Psoas muscle (tissue), 8 donors: ENCODE measurements at regions of chr13 and their contacts with region 1.

Region 1: DNA sequence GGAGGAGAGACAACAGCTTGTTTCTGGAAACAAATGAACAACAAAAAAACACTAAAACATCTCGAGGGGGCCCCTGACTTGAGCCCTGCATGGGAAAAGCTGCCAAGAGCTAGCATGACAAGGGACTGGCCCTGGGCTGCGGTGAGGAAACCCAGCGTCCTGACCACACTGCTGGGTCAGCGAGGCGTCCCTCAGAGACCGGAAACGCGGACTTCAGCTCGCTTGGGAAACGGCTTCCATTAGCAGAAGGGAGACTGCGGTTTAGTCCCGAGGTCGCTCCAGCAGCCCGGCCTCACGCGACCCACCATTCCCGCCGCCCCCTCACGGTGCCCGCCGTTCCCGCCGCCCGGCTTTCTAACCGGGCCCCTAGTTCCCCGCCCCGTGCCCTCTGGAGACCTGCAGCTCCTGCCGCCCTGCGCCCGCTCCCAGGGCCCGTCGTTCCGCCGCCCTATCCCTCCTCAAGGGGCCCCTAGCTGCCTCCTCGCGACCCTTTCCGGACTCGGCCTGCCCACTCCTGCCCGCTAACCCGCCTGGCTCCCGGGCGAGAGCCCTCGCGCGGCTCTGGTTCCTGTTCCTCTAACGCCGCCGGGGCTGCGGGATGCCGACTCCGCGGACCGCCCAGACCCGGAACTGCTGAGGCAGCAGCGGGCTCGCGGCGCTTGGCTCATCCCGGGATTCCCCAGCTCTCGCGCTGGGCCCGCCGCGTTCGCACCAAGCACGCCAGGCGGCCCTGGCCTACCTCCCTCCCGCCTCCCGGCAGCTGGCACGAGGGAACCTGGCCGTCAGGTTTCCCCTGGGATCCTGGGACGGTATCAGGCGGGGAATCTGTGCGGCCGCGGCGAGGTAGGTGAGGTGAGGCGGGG is at the start of gene CCDC122:
- DNase-seq: peak; percentile 88 to 90
- ATAC-seq: peak; percentile 90 to 94 (median 92)
- H3K4me3 ChIP-seq: peak within 1 kb of the TSS; percentile 89
- H3K27ac ChIP-seq: peak within 1 kb of the TSS; percentile 85
- H3K4me1 ChIP-seq: no peaks in the 10 kb centered on the region
- H3K27me3 ChIP-seq: no peaks in the 10 kb centered on the region
- CTCF ChIP-seq: no peak
- total RNA-seq, gene CCDC122: 0.63 to 1.6 (median 0.97) TPM

Region 2: GRCh38 chr13:42594970-42595571 is 1284.1 kb before region 1 on chr13:
- intact Hi-C with region 1: loop called in 1 of 2 experiments (anchors 5 kb)
- DNase-seq: no peak
- ATAC-seq: peak; percentile 39 to 83 (median 54)
- H3K4me3 ChIP-seq: no peak overlapping the region
- H3K27ac ChIP-seq: no peak overlapping the region
- H3K4me1 ChIP-seq: no peaks in the 10 kb centered on the region
- H3K27me3 ChIP-seq: peaks cover 0 to 2% (median 0%) of the 10 kb centered on the region in 3 donors
- CTCF ChIP-seq: peak; percentile 82

Region 3: DNA sequence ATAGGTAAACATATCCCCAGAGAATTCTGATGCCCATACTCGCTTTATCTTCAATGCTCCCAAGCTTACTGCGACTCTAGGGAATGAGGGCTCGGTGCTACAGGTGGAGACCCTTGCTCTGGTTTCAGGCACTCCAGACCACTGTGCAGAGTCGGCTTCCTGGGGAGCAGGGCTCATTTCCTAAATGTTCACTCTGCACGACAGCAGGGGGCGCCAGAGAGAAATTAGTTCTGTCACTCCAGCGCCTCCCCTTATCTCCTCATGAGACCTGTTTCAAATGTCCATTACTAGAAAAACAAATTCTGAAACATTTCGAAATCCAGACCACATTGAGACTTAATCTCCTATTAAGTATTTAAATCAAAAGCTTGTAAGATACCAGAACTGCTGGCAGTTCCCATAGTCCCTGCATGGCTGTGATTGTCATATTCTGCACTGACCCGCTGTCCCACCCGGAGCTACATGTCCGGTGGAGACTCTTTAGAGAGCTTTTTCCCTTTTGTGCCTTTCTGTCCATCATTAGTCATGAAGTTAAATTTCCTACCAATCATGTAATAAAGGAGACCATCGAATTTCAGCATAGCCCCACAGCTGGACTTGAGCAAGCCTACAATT is 909.5 kb before region 1 on chr13:
- intact Hi-C with region 1: loop called (anchors 2 to 10 kb)
- DNase-seq: peak; percentile 81 to 88
- ATAC-seq: peak; percentile 68 to 98 (median 86)
- H3K4me3 ChIP-seq: no peak overlapping the region
- H3K27ac ChIP-seq: no peak overlapping the region
- H3K4me1 ChIP-seq: no peaks in the 10 kb centered on the region
- H3K27me3 ChIP-seq: no peaks in the 10 kb centered on the region
- CTCF ChIP-seq: peak; percentile 73

Region 4: GRCh38 chr13:43085545-43085944 is 793.6 kb before region 1 on chr13:
- intact Hi-C with region 1: loop called in 1 of 2 experiments (anchors 10 kb)
- DNase-seq: no peak
- ATAC-seq: no peak
- H3K4me3 ChIP-seq: no peak overlapping the region
- H3K27ac ChIP-seq: no peak overlapping the region
- H3K4me1 ChIP-seq: peaks cover 3% of the 10 kb centered on the region
- H3K27me3 ChIP-seq: no peaks in the 10 kb centered on the region
- CTCF ChIP-seq: peak; percentile 73

Region 5: GRCh38 chr13:43303033-43303729 is 575.9 kb before region 1 on chr13:
- intact Hi-C with region 1: loop called in 1 of 2 experiments (anchors 10 kb)
- DNase-seq: peak; percentile 41 to 82
- ATAC-seq: peak; percentile 86 to 95 (median 91)
- H3K4me3 ChIP-seq: no peak overlapping the region
- H3K27ac ChIP-seq: peak overlapping the region; percentile 30
- H3K4me1 ChIP-seq: peaks cover 24% of the 10 kb centered on the region
- H3K27me3 ChIP-seq: no peaks in the 10 kb centered on the region
- CTCF ChIP-seq: peak; percentile 69

Region 6: GRCh38 chr13:43664700-43665191 is 214.4 kb before region 1 on chr13:
- intact Hi-C with region 1: no loop called
- DNase-seq: no peak
- ATAC-seq: peak in 1 of 4 donors; percentile 27
- H3K4me3 ChIP-seq: no peak overlapping the region
- H3K27ac ChIP-seq: no peak overlapping the region
- H3K4me1 ChIP-seq: peaks cover 7% of the 10 kb centered on the region
- H3K27me3 ChIP-seq: no peaks in the 10 kb centered on the region
- CTCF ChIP-seq: no peak

Region 7: GRCh38 chr13:44667943-44668342 is 788.8 kb after region 1 on chr13:
- intact Hi-C with region 1: no loop called
- DNase-seq: no peak
- ATAC-seq: peak in 3 of 4 donors; percentile 57 to 83 (median 71)
- H3K4me3 ChIP-seq: no peak overlapping the region
- H3K27ac ChIP-seq: no peak overlapping the region
- H3K4me1 ChIP-seq: peaks cover 16% of the 10 kb centered on the region
- H3K27me3 ChIP-seq: no peaks in the 10 kb centered on the region
- CTCF ChIP-seq: no peak